ENCODE measurements at regions of chr20 and their contacts with region 1.

Region 1: GRCh38 chr20:1313236-1313964 is 15.5 kb downstream of the SDCBP2 start:
- DNase-seq: peak; percentile 52 to 83 (median 59)
- ATAC-seq: peak; percentile 81
- H3K4me3 ChIP-seq: peak overlapping the region; percentile 1
- H3K4me3 Mint-ChIP-seq: no peak overlapping the region
- H3K27ac ChIP-seq: no peak overlapping the region
- H3K27ac Mint-ChIP-seq: no peak overlapping the region
- H3K4me1 ChIP-seq: peaks cover 11% of the 10 kb centered on the region
- H3K4me1 Mint-ChIP-seq: no peaks in the 10 kb centered on the region
- H3K27me3 ChIP-seq: no peaks in the 10 kb centered on the region
- H3K27me3 Mint-ChIP-seq: no peaks in the 10 kb centered on the region
- CTCF ChIP-seq: peak; percentile 98

Region 2: DNA sequence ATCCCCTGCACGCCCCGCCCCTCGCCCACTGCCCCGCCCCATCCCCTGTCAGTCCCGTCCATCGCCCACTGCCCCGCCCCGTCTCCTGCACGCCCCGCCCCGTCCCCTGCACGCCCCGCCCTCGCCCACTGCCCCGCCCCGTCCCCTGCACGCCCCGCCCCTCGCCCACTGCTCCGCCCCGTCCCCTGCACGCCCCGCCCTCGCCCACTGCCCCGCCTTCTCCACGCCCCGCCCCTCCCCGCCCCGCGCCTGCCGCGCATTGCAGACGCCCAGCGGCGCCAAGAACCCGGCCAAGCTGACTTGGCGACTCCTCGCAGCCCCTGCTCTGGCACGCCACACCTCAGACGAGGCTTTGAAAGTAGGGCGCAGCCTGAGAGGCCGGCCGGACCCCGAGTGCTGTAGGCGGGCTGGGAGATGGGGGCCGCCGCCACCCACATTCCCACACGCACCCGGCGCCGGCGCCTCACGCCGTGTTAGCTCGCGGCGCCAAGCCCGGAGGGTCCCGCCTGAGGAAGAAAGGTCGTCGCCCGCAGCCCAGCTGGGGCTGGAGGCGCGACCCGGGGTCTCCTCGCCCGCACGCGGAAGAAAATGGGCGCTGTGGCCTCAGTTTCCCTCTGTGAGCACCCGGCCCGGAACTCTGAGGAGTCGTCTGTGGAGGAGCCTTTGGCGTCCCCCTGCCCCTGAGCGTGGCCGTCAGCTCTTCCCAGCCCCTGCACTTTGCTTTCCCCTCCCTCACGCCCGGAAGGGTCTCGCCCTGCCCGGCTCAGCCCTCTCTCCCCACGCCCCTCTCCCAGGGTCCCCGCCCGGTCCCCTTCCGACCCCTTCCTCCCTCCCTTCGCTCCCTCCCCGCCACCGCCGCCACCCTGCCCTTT is 87.4 kb before region 1 on chr20 and contains the start of gene RAD21L1:
- CTCF ChIA-PET with region 1: no interaction called
- POLR2A ChIA-PET with region 1: no interaction called
- intact Hi-C with region 1: loop called in 1 of 2 experiments (anchors 5 kb)
- DNase-seq: peak; percentile 73 to 92 (median 80)
- ATAC-seq: peak; percentile 80
- H3K4me3 ChIP-seq: peak within 1 kb of the TSS; percentile 77
- H3K4me3 Mint-ChIP-seq: peak within 1 kb of the TSS; percentile 92
- H3K27ac ChIP-seq: peak within 1 kb of the TSS in 1 of 2 donors; percentile 22
- H3K27ac Mint-ChIP-seq: peak within 1 kb of the TSS; percentile 53
- H3K4me1 ChIP-seq: peaks cover 18% of the 10 kb centered on the region
- H3K4me1 Mint-ChIP-seq: peaks cover 19% of the 10 kb centered on the region
- H3K27me3 ChIP-seq: peaks cover 0 to 15% of the 10 kb centered on the region in 2 experiments
- H3K27me3 Mint-ChIP-seq: peaks cover 21% of the 10 kb centered on the region
- CTCF ChIP-seq: no peak
- total RNA-seq, gene RAD21L1: 0.58 TPM in 1 of 2 experiments, not detected in the other

Region 3: DNA sequence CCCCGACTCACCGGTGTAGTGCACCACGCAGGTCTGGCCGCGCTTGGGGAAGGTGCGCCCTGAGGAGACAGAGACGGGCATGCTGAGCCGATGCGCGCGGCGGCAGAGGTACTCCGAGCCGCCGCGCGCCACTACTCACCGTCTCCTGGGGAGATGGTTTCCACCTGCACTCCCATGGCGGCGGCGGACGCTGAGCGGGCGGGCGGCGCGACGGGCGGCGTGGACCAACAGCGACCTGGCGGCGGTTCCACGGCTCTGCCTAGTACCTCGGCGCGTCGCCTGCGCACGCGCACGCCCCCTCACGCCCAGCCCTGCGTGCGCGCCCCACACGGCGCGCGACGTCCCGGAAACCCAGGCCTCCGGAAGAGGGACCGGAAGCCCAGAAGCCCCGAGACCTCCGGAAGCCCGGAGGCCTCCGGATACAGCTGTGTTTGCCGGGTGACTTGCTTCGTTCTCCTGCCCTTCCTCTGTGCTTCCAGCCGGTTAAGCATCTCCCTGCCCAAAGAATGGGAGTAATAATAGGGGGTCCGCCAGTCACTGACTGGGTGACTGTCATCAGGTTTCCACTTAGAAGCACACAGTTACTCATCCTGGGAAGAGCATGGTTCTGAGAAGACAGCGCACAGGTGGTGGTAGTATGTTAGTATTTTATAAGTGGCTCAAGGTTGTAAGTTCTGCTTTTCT is 79.6 kb after region 1 on chr20 and contains the start of gene FKBP1A:
- CTCF ChIA-PET with region 1: no interaction called
- POLR2A ChIA-PET with region 1: no interaction called
- intact Hi-C with region 1: loop called in 1 of 2 experiments (anchors 5 kb)
- DNase-seq: peak; percentile 84 to 97 (median 92)
- ATAC-seq: peak; percentile 83
- H3K4me3 ChIP-seq: peak within 1 kb of the TSS; percentile 85
- H3K4me3 Mint-ChIP-seq: peak within 1 kb of the TSS; percentile 98
- H3K27ac ChIP-seq: peak within 1 kb of the TSS; percentile 37 to 72
- H3K27ac Mint-ChIP-seq: peak within 1 kb of the TSS; percentile 89
- H3K4me1 ChIP-seq: peaks cover 60% of the 10 kb centered on the region
- H3K4me1 Mint-ChIP-seq: peaks cover 61% of the 10 kb centered on the region
- H3K27me3 ChIP-seq: no peaks in the 10 kb centered on the region
- H3K27me3 Mint-ChIP-seq: no peaks in the 10 kb centered on the region
- CTCF ChIP-seq: no peak
- total RNA-seq, gene FKBP1A: 43.3 to 45.4 TPM

Region 4: GRCh38 chr20:1437235-1437904 is 124.0 kb after region 1 on chr20:
- CTCF ChIA-PET with region 1: interaction called, 7 read pairs
- POLR2A ChIA-PET with region 1: interaction called, 3 read pairs
- intact Hi-C with region 1: loop called (anchors 1 kb)
- DNase-seq: peak; percentile 68 to 90 (median 75)
- ATAC-seq: peak; percentile 70
- H3K4me3 ChIP-seq: no peak overlapping the region
- H3K4me3 Mint-ChIP-seq: no peak overlapping the region
- H3K27ac ChIP-seq: no peak overlapping the region
- H3K27ac Mint-ChIP-seq: no peak overlapping the region
- H3K4me1 ChIP-seq: peaks cover 27% of the 10 kb centered on the region
- H3K4me1 Mint-ChIP-seq: peaks cover 56% of the 10 kb centered on the region
- H3K27me3 ChIP-seq: no peaks in the 10 kb centered on the region
- H3K27me3 Mint-ChIP-seq: no peaks in the 10 kb centered on the region
- CTCF ChIP-seq: peak; percentile 90

Region 5: GRCh38 chr20:1503564-1504227 is 190.3 kb after region 1 on chr20:
- CTCF ChIA-PET with region 1: interaction called, 3 read pairs
- POLR2A ChIA-PET with region 1: no interaction called
- intact Hi-C with region 1: loop called (anchors 1 to 5 kb)
- DNase-seq: peak; percentile 54 to 93 (median 69)
- ATAC-seq: peak; percentile 100
- H3K4me3 ChIP-seq: no peak overlapping the region
- H3K4me3 Mint-ChIP-seq: no peak overlapping the region
- H3K27ac ChIP-seq: no peak overlapping the region
- H3K27ac Mint-ChIP-seq: no peak overlapping the region
- H3K4me1 ChIP-seq: no peaks in the 10 kb centered on the region
- H3K4me1 Mint-ChIP-seq: peaks cover 5% of the 10 kb centered on the region
- H3K27me3 ChIP-seq: peaks cover 3 to 22% of the 10 kb centered on the region in 2 experiments
- H3K27me3 Mint-ChIP-seq: peaks cover 23% of the 10 kb centered on the region
- CTCF ChIP-seq: peak; percentile 98

Region 6: DNA sequence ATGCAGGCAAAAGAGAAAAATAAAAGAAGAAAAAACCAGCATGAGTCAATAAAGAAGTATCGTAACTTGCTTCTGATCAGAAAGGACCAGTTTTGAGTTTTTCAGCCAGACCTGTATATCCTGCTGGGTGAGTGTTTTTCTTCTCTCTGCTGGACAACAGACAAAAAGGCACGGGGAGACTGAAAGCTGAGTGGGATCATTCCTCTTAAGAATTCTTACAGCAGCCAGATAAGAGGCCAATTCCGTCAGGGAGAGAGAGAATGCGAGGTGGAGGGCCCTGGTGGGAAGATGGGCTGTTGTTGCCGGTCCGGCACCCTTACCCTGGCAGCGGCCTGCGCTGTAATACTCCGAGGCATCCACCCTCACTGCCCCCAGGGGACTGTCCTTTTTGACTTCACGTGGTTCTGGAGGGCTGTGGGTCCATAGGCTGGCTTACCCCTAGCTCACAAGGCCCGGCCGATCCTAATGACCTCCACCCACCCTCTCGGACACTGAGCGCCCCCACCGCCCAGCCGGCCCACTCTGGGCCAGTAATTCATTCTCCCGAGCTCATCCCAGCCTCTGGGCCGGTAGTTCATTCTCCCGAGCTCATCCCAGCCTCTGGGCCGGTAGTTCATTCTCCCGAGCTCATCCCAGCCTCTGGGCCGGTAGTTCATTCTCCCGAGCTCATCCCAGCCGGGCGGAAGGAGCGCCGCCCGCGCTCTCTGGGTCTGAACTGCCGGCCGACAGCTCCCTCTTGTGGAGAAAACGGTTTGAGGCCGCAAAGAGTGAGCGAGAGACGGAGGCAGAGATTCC is 463.5 kb after region 1 on chr20:
- CTCF ChIA-PET with region 1: no interaction called
- POLR2A ChIA-PET with region 1: no interaction called
- intact Hi-C with region 1: loop called in 1 of 2 experiments (anchors 10 kb)
- DNase-seq: peak; percentile 70 to 90 (median 81)
- ATAC-seq: peak; percentile 93
- H3K4me3 ChIP-seq: peak overlapping the region; percentile 66
- H3K4me3 Mint-ChIP-seq: peak overlapping the region; percentile 81
- H3K27ac ChIP-seq: no peak overlapping the region
- H3K27ac Mint-ChIP-seq: no peak overlapping the region
- H3K4me1 ChIP-seq: peaks cover 9% of the 10 kb centered on the region
- H3K4me1 Mint-ChIP-seq: peaks cover 16% of the 10 kb centered on the region
- H3K27me3 ChIP-seq: peaks cover 0 to 11% of the 10 kb centered on the region in 2 experiments
- H3K27me3 Mint-ChIP-seq: peaks cover 17% of the 10 kb centered on the region
- CTCF ChIP-seq: peak; percentile 77